Activated CD8-positive, alpha-beta memory T cell treated with anti-CD3 and anti-CD28 coated beads, Interleukin-2, amount 10 ng/mL, durations not matched to agents 7 days and 5 days (primary cell): ENCODE measurements at regions of chr19 and their contacts with region 1.

Region 1: GRCh38 chr19:4089400-4089908 is 22.8 kb upstream of the ZBTB7A start:
- DNase-seq: peak; percentile 92
- ATAC-seq: peak; percentile 77
- H3K4me3 Mint-ChIP-seq: peak overlapping the region; percentile 62
- H3K27ac Mint-ChIP-seq: peak overlapping the region; percentile 92
- H3K4me1 Mint-ChIP-seq: peaks cover 58% of the 10 kb centered on the region
- H3K27me3 Mint-ChIP-seq: no peaks in the 10 kb centered on the region

Region 2: DNA sequence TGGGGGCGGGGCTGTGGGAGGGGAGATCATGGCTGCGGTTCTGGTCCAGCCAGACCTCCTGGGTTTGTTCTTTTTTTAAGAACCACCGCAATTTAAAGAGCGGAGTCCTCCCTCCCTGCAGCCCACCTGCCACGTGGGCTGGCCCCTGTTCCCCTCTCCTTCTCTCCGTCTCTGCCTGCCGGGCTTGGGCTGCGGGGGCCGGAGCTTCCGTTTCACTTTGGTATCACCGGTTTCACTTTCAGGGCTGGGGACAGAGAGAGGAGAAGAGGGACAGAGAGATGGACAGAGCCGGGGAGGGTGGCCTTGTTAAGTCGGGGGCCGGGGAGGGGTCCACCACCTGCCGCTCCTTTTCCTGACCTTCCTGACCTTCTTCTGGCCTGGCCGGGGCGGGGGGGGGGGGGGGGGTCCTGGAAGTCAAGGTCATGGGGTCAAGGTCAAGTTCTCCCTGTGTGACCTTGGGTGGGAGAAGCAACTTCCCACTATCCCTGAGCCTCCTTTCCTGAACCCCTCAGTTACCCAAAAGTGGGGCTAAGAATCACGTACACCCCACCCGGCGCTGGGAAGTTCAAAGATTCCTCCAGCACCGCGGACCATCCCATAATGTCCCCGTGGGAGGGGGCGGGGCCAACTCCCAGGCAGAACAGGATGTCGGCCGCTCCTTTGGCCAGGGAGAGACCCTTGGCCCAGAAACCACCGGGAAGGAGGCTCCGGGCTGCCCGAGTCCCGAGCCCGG is 11.4 kb before region 1 on chr19:
- CTCF ChIA-PET with region 1: interaction called, 16 read pairs
- DNase-seq: peak; percentile 78
- ATAC-seq: peak; percentile 67
- H3K4me3 Mint-ChIP-seq: peak overlapping the region; percentile 62
- H3K27ac Mint-ChIP-seq: peak overlapping the region; percentile 87
- H3K4me1 Mint-ChIP-seq: peaks cover 57% of the 10 kb centered on the region
- H3K27me3 Mint-ChIP-seq: no peaks in the 10 kb centered on the region

Region 3: GRCh38 chr19:4103073-4103418 is 13.6 kb after region 1 on chr19:
- CTCF ChIA-PET with region 1: interaction called, 30 read pairs
- DNase-seq: no peak
- ATAC-seq: no peak
- H3K4me3 Mint-ChIP-seq: no peak overlapping the region
- H3K27ac Mint-ChIP-seq: peak overlapping the region; percentile 98
- H3K4me1 Mint-ChIP-seq: peaks cover 44% of the 10 kb centered on the region
- H3K27me3 Mint-ChIP-seq: no peaks in the 10 kb centered on the region

Region 4: DNA sequence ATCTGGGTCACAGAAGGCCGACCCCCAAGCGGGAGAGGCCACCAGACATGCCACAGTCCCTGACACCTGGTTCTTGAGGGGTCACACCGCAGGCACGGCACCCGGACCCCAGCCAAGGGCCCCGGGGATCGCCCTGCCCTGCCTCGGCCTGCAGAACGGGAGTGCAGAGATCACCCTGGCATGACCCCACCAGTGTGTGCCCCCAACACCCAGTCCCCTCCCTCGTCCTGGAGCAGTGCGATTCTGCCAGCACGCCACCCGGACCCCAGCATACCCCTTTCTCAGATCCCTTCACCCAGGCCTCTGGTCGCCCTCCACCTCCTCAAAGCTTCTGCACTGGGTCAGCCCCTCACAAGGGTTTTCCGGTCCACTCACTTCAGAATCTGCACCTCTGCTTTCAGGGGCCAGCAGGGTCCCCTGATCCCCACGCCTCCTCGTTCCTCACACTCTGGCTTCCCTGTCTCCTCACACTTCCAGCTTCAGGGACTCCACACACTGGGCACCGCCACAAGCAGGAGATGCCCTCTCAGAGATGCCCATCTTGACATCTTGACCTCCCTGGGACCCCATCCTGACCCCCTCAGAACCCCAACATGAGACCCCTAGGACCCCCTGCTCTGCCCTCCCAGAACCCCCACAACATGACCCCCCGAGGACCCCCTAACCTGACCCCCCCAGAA is 31.6 kb after region 1 on chr19:
- CTCF ChIA-PET with region 1: no interaction called
- DNase-seq: no peak
- ATAC-seq: no peak
- H3K4me3 Mint-ChIP-seq: no peak overlapping the region
- H3K27ac Mint-ChIP-seq: no peak overlapping the region
- H3K4me1 Mint-ChIP-seq: peaks cover 40% of the 10 kb centered on the region
- H3K27me3 Mint-ChIP-seq: no peaks in the 10 kb centered on the region